ENCODE measurements at regions of chr11 and their contacts with region 1.

Region 1: DNA sequence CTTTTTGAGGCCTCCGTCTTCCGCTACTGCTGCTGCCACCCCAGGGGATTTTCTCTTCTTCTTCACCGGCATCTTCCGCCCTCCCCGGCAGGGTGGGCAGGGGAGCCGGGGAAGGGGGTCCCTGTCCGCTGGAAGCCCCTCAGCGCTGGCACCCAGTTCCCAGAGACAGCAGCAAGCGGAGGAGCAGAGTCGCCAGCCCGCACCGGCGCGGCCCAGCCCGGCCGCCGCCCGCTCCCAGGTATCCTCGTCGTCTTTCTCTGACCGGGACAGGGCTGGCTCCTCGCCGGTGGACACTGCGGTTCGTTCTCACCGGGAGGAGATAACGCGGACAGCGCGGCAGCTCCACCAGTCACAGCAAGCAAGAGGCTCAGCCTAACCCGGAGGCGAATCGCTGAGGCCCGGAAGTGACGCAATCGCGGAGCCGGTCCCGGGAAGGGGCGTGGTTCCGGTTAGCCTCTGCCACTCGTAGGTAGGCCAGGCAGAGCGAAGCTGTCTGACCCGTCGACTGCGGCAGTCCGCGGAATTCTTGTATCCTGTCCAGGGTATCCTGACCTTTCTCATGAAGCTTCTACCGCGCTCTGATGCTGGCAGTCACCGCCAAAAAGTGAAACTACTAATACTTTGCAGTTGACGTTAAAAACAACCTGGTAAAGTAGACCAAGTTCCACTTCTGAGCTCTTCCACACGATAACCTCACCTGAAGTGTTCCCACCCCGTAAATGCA is at the start of gene DCUN1D5:
- DNase-seq: peak; percentile 99
- ATAC-seq: peak; percentile 94
- H3K4me3 ChIP-seq: peak within 1 kb of the TSS; percentile 97
- H3K27ac ChIP-seq: peak within 1 kb of the TSS; percentile 67
- H3K4me1 ChIP-seq: peaks cover 32% of the 10 kb centered on the region
- H3K27me3 ChIP-seq: no peaks in the 10 kb centered on the region
- CTCF ChIP-seq: no peak
- total RNA-seq, gene DCUN1D5: 206 and 275 TPM in 2 replicates

Region 2: DNA sequence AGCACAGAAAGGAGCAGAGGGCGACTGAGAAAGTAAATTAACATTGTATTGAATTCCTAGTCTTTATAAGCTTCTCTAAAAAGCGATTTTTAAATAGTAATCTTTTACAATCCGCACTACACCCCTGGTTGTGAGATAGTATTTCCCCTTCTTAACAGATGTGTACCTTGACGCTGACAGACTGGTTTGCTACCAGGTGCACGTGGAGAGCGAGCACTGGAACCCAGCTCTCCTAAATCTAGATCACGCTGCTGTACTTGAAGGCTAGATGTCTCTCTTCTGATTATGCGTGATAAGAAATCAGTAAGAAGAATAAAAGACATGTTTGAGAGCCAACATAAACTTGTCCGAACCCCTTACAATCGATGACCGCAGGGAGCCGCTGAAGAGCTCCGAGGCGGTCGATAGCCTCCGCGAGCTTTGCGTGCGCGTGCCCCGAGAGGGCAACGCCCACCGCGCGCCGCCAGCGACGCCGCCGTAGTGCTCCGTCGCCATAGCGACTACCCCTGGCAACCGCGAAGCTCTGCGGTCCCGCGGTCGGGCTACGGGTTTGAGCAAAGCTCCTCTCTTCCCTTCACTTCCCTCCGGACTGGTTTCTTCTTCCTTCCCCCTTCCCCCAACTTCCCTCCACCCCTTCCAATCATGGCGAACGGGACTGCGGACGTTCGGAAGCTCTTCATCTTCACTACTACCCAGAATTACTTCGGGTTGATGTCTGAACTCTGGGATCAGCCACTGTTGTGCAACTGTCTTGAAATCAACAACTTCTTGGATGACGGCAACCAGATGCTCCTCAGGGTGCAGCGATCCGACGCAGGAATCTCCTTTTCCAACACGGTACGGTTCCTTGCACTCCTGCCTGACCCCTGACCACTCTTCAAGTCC is 17.2 kb after region 1 on chr11 and contains the start of gene DYNC2H1:
- CTCF ChIA-PET with region 1: interaction called, 11 read pairs
- POLR2A ChIA-PET with region 1: interaction called, 16 read pairs
- intact Hi-C with region 1: loop called (anchors 1 kb)
- DNase-seq: peak; percentile 99
- ATAC-seq: peak; percentile 94
- H3K4me3 ChIP-seq: peak within 1 kb of the TSS; percentile 88
- H3K27ac ChIP-seq: peak within 1 kb of the TSS; percentile 35
- H3K4me1 ChIP-seq: peaks cover 29% of the 10 kb centered on the region
- H3K27me3 ChIP-seq: no peaks in the 10 kb centered on the region
- CTCF ChIP-seq: peak; percentile 69
- total RNA-seq, gene DYNC2H1: 20.4 and 28.9 TPM in 2 replicates

Region 3: DNA sequence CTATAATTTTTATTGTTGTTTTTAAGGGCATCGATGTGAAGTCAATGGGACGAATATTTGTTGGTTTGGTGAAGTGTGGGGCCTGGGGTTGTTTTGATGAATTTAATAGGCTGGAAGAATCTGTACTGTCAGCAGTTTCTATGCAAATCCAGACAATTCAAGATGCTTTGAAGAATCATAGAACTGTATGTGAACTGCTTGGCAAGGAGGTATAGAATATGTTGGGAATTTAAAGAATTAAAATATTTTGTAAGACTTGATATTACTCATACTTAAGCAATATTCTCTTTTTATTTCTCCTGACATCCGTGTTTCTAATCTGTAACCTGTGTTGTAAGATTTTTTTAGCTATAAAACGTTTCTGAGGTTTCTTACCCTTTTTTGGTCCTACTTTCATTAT is 78.9 kb after region 1 on chr11:
- CTCF ChIA-PET with region 1: no interaction called
- POLR2A ChIA-PET with region 1: no interaction called
- intact Hi-C with region 1: no loop called
- DNase-seq: no peak
- ATAC-seq: no peak
- H3K4me3 ChIP-seq: no peak overlapping the region
- H3K27ac ChIP-seq: no peak overlapping the region
- H3K4me1 ChIP-seq: no peaks in the 10 kb centered on the region
- H3K27me3 ChIP-seq: no peaks in the 10 kb centered on the region
- CTCF ChIP-seq: no peak